ENCODE measurements at regions of chr19 and their contacts with region 1.

Region 1: DNA sequence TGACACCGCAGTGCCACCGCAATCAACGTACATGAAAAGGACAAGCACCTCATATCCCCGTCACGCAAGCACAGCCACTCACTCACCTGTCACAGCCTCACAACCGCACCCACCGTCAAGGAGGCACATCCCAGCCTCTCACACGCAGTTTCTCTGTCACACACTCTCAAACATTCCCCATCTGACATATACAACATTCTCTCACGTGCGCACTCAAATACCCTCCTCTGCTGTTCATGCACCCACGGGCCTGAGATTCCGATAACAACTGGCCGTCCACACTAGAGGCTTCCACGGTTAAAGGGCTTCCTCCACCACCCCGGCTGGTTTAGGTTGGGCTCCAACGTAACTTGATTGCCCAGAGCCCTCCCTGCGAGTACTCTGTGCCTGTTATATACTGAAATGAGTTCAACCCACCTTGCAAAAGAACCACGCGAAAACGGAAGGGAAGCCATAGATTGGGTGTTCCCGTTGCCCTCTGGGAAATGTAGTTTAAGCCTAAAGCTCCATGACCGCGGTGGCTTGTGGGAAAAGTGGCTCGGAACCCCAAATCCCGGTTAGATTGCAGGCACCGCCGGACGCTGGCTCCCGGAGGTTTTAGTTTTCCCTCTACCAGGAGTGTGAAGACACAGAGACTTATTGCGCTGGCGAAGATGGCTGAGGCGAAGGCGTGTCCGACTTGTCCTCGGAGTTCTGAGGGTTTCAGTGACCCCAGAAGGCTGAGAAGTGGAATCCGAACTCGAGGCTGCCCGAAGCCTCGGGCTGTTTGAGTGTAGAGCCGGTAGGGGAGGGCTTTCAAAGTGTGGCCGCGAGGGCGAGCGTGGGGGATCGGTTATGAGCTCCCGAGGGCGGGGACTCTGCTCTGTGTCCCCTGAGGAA is at the start of gene ZNF573:
- DNase-seq: peak; percentile 87
- ATAC-seq: peak; percentile 97
- H3K4me3 ChIP-seq: peak within 1 kb of the TSS; percentile 76
- H3K27ac ChIP-seq: peak within 1 kb of the TSS; percentile 82
- H3K4me1 ChIP-seq: 0 out of 2 replicates have a peak, but pooled peaks cover 2% of the 10 kb centered on the region
- H3K27me3 ChIP-seq: no peaks in the 10 kb centered on the region
- CTCF ChIP-seq: 0 out of 2 replicates have a peak, but pooled peaks have one; percentile 9
- POLR2A ChIP-seq: peak; percentile 69
- RAD21 ChIP-seq: no peak
- total RNA-seq, gene ZNF573: 3.2 and 4.2 TPM in 2 replicates

Region 2: GRCh38 chr19:37594304-37594981 is 184.9 kb before region 1 on chr19 and contains the starts of genes ZNF540 and ZNF571:
- CTCF ChIA-PET with region 1: no interaction called
- POLR2A ChIA-PET with region 1: no interaction called
- dilution Hi-C with region 1: no loop called
- in situ Hi-C with region 1: no loop called
- intact Hi-C with region 1: loop called (anchors 10 kb)
- DNase-seq: peak; percentile 93
- ATAC-seq: peak; percentile 99
- H3K4me3 ChIP-seq: peak within 1 kb of the TSS; percentile 91
- H3K27ac ChIP-seq: peak within 1 kb of the TSS; percentile 51
- H3K4me1 ChIP-seq: no peaks in the 10 kb centered on the region
- H3K27me3 ChIP-seq: no peaks in the 10 kb centered on the region
- CTCF ChIP-seq: no peak
- POLR2A ChIP-seq: 0 out of 2 replicates have a peak, but pooled peaks have one; percentile 38
- RAD21 ChIP-seq: no peak
- total RNA-seq, gene ZNF540: 0.28 and 0.54 TPM in 2 replicates
- total RNA-seq, gene ZNF571: 2.2 and 2.5 TPM in 2 replicates

Region 3: GRCh38 chr19:37655689-37656371 is 123.5 kb before region 1 on chr19:
- CTCF ChIA-PET with region 1: no interaction called
- POLR2A ChIA-PET with region 1: no interaction called
- dilution Hi-C with region 1: no loop called
- in situ Hi-C with region 1: no loop called
- intact Hi-C with region 1: loop called (anchors 5 kb)
- DNase-seq: peak; percentile 68
- ATAC-seq: peak; percentile 78
- H3K4me3 ChIP-seq: peak overlapping the region; percentile 89
- H3K27ac ChIP-seq: peak overlapping the region; percentile 71
- H3K4me1 ChIP-seq: no peaks in the 10 kb centered on the region
- H3K27me3 ChIP-seq: no peaks in the 10 kb centered on the region
- CTCF ChIP-seq: no peak; the same call in 1 of the 2 replicates
- POLR2A ChIP-seq: no peak; the same call in 1 of the 2 replicates
- RAD21 ChIP-seq: no peak

Region 4: GRCh38 chr19:37719111-37719926 is 60.0 kb before region 1 on chr19 and contains the start of gene ZNF607:
- CTCF ChIA-PET with region 1: no interaction called
- POLR2A ChIA-PET with region 1: no interaction called
- dilution Hi-C with region 1: no loop called
- in situ Hi-C with region 1: no loop called
- intact Hi-C with region 1: loop called (anchors 1 kb)
- DNase-seq: peak; percentile 84
- ATAC-seq: peak; percentile 99
- H3K4me3 ChIP-seq: peak within 1 kb of the TSS; percentile 81
- H3K27ac ChIP-seq: peak within 1 kb of the TSS; percentile 26
- H3K4me1 ChIP-seq: peaks cover 5% of the 10 kb centered on the region; the same call in 1 of the 2 replicates
- H3K27me3 ChIP-seq: no peaks in the 10 kb centered on the region
- CTCF ChIP-seq: peak; percentile 53
- POLR2A ChIP-seq: no peak
- RAD21 ChIP-seq: 0 out of 2 replicates have a peak, but pooled peaks have one; percentile 14
- total RNA-seq, gene ZNF607: 2.7 and 3.6 TPM in 2 replicates

Region 5: GRCh38 chr19:37763488-37763887 is 15.9 kb before region 1 on chr19:
- CTCF ChIA-PET with region 1: no interaction called
- POLR2A ChIA-PET with region 1: no interaction called
- dilution Hi-C with region 1: no loop called
- in situ Hi-C with region 1: no loop called
- intact Hi-C with region 1: loop called (anchors 2 kb)
- DNase-seq: peak; percentile 33
- ATAC-seq: no peak
- H3K4me3 ChIP-seq: no peak overlapping the region
- H3K27ac ChIP-seq: no peak overlapping the region
- H3K4me1 ChIP-seq: no peaks in the 10 kb centered on the region
- H3K27me3 ChIP-seq: no peaks in the 10 kb centered on the region
- CTCF ChIP-seq: no peak
- POLR2A ChIP-seq: no peak
- RAD21 ChIP-seq: no peak